ENCODE measurements at regions of chr1 and their contacts with region 1.

Region 1: GRCh38 chr1:11099310-11100149 is at the start of gene EXOSC10:
- DNase-seq: peak; percentile 97
- ATAC-seq: peak; percentile 98
- H3K4me3 Mint-ChIP-seq: peak within 1 kb of the TSS; percentile 95
- H3K27ac Mint-ChIP-seq: peak within 1 kb of the TSS; percentile 92
- H3K4me1 Mint-ChIP-seq: peaks cover 11% of the 10 kb centered on the region
- H3K27me3 Mint-ChIP-seq: no peaks in the 10 kb centered on the region
- total RNA-seq, gene EXOSC10: 74.3 to 89.6 TPM

Region 2: GRCh38 chr1:10472220-10473144 is 627.0 kb before region 1 on chr1 and contains the start of gene DFFA:
- CTCF ChIA-PET with region 1: no interaction called
- POLR2A ChIA-PET with region 1: no interaction called
- intact Hi-C with region 1: loop called in 1 of 2 experiments (anchors 1 kb)
- DNase-seq: peak; percentile 96
- ATAC-seq: peak; percentile 83
- H3K4me3 Mint-ChIP-seq: peak within 1 kb of the TSS; percentile 97
- H3K27ac Mint-ChIP-seq: peak within 1 kb of the TSS; percentile 92
- H3K4me1 Mint-ChIP-seq: peaks cover 38% of the 10 kb centered on the region
- H3K27me3 Mint-ChIP-seq: no peaks in the 10 kb centered on the region
- total RNA-seq, gene DFFA: 45.7 to 46.4 TPM

Region 3: GRCh38 chr1:11012250-11013171 is 87.0 kb before region 1 on chr1 and contains the start of gene TARDBP:
- CTCF ChIA-PET with region 1: no interaction called
- POLR2A ChIA-PET with region 1: interaction called, 3 read pairs
- intact Hi-C with region 1: loop called in 1 of 2 experiments (anchors 1 kb)
- DNase-seq: peak; percentile 94
- ATAC-seq: peak; percentile 89
- H3K4me3 Mint-ChIP-seq: peak within 1 kb of the TSS; percentile 93
- H3K27ac Mint-ChIP-seq: peak within 1 kb of the TSS; percentile 99
- H3K4me1 Mint-ChIP-seq: peaks cover 30% of the 10 kb centered on the region
- H3K27me3 Mint-ChIP-seq: no peaks in the 10 kb centered on the region
- total RNA-seq, gene TARDBP: 180 to 190 TPM

Region 4: GRCh38 chr1:11027316-11027715 is 72.2 kb before region 1 on chr1:
- CTCF ChIA-PET with region 1: no interaction called
- POLR2A ChIA-PET with region 1: interaction called, 10 read pairs
- intact Hi-C with region 1: no loop called
- DNase-seq: no peak
- ATAC-seq: no peak
- H3K4me3 Mint-ChIP-seq: no peak overlapping the region
- H3K27ac Mint-ChIP-seq: no peak overlapping the region
- H3K4me1 Mint-ChIP-seq: peaks cover 22% of the 10 kb centered on the region
- H3K27me3 Mint-ChIP-seq: no peaks in the 10 kb centered on the region

Region 5: GRCh38 chr1:11059990-11060830 is 39.3 kb before region 1 on chr1 and contains the start of gene SRM:
- CTCF ChIA-PET with region 1: interaction called, 6 read pairs
- POLR2A ChIA-PET with region 1: interaction called, 3 read pairs
- intact Hi-C with region 1: loop called (anchors 1 kb)
- DNase-seq: peak; percentile 95
- ATAC-seq: peak; percentile 98
- H3K4me3 Mint-ChIP-seq: peak within 1 kb of the TSS; percentile 93
- H3K27ac Mint-ChIP-seq: peak within 1 kb of the TSS; percentile 94
- H3K4me1 Mint-ChIP-seq: peaks cover 41% of the 10 kb centered on the region
- H3K27me3 Mint-ChIP-seq: no peaks in the 10 kb centered on the region
- total RNA-seq, gene SRM: 180 to 242 TPM

Region 6: DNA sequence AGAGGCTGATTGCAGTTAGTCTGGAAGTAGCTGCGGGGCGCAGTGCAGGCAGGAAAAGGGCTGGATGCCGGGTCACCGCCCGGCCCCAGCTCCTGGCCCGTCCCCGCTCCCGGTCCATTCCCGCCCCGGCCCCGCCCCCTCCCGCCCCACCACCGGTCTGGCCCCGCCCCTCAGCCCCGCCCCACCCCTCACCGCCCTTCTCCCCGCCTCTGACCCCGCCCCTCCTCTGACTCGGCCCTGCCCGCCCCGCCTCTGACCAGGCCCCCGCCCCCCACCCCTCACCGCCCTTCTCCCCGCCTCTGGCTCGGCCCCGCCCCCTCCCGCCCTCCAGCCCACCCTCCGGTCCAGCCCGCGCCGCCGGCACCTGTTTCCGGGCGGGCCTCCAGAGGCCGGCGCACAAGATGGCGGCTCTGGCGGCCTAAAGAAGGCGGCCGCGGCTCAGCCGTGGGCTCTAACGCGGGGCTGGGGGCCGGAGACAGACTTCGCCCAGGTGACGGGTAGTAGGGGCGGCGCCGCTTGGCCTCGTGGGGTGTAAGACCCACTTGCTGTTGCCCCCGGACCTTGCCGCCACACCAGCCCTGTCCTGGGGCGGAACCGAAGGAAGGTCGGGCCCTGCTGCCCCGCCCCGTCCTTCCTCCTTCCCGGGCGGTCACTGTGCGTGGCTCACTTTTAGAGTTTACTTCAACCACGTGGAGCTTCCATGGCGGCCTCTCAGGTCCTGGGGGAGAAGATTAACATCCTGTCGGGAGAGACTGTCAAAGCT is 173.5 kb after region 1 on chr1 and contains the start of gene UBIAD1:
- CTCF ChIA-PET with region 1: no interaction called
- POLR2A ChIA-PET with region 1: no interaction called
- intact Hi-C with region 1: loop called in 1 of 2 experiments (anchors 1 kb)
- DNase-seq: peak; percentile 95
- ATAC-seq: peak; percentile 84
- H3K4me3 Mint-ChIP-seq: peak within 1 kb of the TSS; percentile 95
- H3K27ac Mint-ChIP-seq: peak within 1 kb of the TSS; percentile 91
- H3K4me1 Mint-ChIP-seq: peaks cover 29% of the 10 kb centered on the region
- H3K27me3 Mint-ChIP-seq: no peaks in the 10 kb centered on the region
- total RNA-seq, gene UBIAD1: 29.2 to 32.0 TPM

Region 7: GRCh38 chr1:11355559-11356475 is 256.3 kb after region 1 on chr1:
- CTCF ChIA-PET with region 1: no interaction called
- POLR2A ChIA-PET with region 1: no interaction called
- intact Hi-C with region 1: no loop called
- DNase-seq: no peak
- ATAC-seq: no peak
- H3K4me3 Mint-ChIP-seq: no peak overlapping the region
- H3K27ac Mint-ChIP-seq: no peak overlapping the region
- H3K4me1 Mint-ChIP-seq: peaks cover 12% of the 10 kb centered on the region
- H3K27me3 Mint-ChIP-seq: peaks cover 8% of the 10 kb centered on the region

Region 8: GRCh38 chr1:11934302-11935056 is 834.9 kb after region 1 on chr1 and contains the start of gene PLOD1:
- CTCF ChIA-PET with region 1: no interaction called
- POLR2A ChIA-PET with region 1: no interaction called
- intact Hi-C with region 1: loop called in 1 of 2 experiments (anchors 10 kb)
- DNase-seq: peak; percentile 88
- ATAC-seq: peak; percentile 98
- H3K4me3 Mint-ChIP-seq: peak within 1 kb of the TSS; percentile 75
- H3K27ac Mint-ChIP-seq: no peak within 1 kb of the TSS
- H3K4me1 Mint-ChIP-seq: peaks cover 4% of the 10 kb centered on the region
- H3K27me3 Mint-ChIP-seq: no peaks in the 10 kb centered on the region
- total RNA-seq, gene PLOD1: 11.7 to 11.9 TPM

Measured in activated CD4-positive, alpha-beta T cell treated with anti-CD3 and anti-CD28 coated beads for 36 hours (primary cell).